ENCODE measurements at regions of chr6 and their contacts with region 1.

Region 1: GRCh38 chr6:14464055-14464454 is 346.5 kb downstream of the CD83 start:
- DNase-seq: no peak
- H3K4me3 Mint-ChIP-seq: no peak overlapping the region
- H3K27ac Mint-ChIP-seq: no peak overlapping the region
- H3K4me1 Mint-ChIP-seq: peaks cover 25% of the 10 kb centered on the region
- H3K27me3 Mint-ChIP-seq: no peaks in the 10 kb centered on the region

Region 2: DNA sequence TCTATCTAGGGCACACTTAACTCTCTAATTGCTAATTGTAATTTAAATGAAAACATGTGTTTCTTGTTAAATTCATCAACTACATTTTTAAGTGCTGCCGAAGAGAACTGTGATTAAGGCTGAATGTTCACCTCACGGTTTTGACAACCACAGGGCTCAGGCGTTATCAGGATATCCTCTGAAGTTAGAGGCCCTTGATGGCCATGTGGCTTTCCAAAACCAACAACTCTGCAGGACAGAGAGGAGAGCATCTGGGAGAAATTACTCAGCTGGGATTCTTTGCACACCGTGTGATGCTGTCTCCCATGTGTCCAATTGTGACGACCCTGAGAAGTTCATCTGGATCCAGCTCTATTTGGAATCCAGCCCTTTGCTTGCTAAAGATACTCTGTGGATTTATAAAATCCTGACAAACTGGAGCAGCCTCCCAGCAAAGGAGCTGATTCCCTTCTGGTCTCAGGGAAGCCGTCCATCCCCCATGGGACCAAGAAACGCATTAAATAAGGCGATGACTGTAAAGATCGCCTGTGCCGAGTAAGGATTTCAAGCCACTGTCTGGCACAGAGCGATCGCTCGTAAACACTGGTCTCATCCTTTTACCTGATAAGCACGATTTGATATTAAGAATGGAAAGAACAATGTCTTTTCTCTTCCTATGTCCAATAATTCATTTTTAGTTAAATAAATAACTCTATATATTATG is 54.6 kb after region 1 on chr6:
- intact Hi-C with region 1: loop called (anchors 10 kb)
- DNase-seq: no peak
- H3K4me3 Mint-ChIP-seq: no peak overlapping the region
- H3K27ac Mint-ChIP-seq: no peak overlapping the region
- H3K4me1 Mint-ChIP-seq: peaks cover 7% of the 10 kb centered on the region
- H3K27me3 Mint-ChIP-seq: no peaks in the 10 kb centered on the region

Region 3: GRCh38 chr6:14660806-14661579 is 196.9 kb after region 1 on chr6:
- intact Hi-C with region 1: no loop called
- DNase-seq: peak; percentile 52
- H3K4me3 Mint-ChIP-seq: no peak overlapping the region
- H3K27ac Mint-ChIP-seq: no peak overlapping the region
- H3K4me1 Mint-ChIP-seq: peaks cover 35% of the 10 kb centered on the region
- H3K27me3 Mint-ChIP-seq: no peaks in the 10 kb centered on the region

Measured in activated T-helper 2 cell treated with anti-CD3 and anti-CD28 coated beads, Interferon-gamma antibody, Interleukin-2, Interleukin-4, amounts not matched to agents 10 μg/mL and 5 μg/mL and 100 μg/mL, durations not matched to agents 14 hours and 24 hours and 36 hours (primary cell).